CD8-positive, alpha-beta memory T cell (primary cell): ENCODE measurements at regions of chr2 and their contacts with region 1.

Region 1: GRCh38 chr2:219229305-219230058 is at the starts of genes ANKZF1 and ATG9A:
- DNase-seq: peak; percentile 96 to 99 (median 98)
- H3K4me3 ChIP-seq: peak within 1 kb of the TSS; percentile 93
- H3K4me3 Mint-ChIP-seq: peak within 1 kb of the TSS; percentile 92 to 100 (median 98)
- H3K27ac ChIP-seq: peak within 1 kb of the TSS; percentile 96
- H3K27ac Mint-ChIP-seq: peak within 1 kb of the TSS; percentile 94 to 100 (median 98)
- H3K4me1 ChIP-seq: peaks cover 44% of the 10 kb centered on the region
- H3K4me1 Mint-ChIP-seq: peaks cover 42 to 79% (median 54%) of the 10 kb centered on the region in 3 donors
- H3K27me3 ChIP-seq: no peaks in the 10 kb centered on the region
- H3K27me3 Mint-ChIP-seq: no peaks in the 10 kb centered on the region
- total RNA-seq, gene ANKZF1: 72.4 to 76.0 TPM
- total RNA-seq, gene ATG9A: 46.1 to 52.9 TPM

Region 2: GRCh38 chr2:219177552-219178376 is 51.7 kb before region 1 on chr2 and contains the start of gene RETREG2:
- CTCF ChIA-PET with region 1: interaction called, 4 read pairs
- POLR2A ChIA-PET with region 1: interaction called, 21 read pairs
- DNase-seq: peak; percentile 73 to 90 (median 85)
- H3K4me3 ChIP-seq: peak within 1 kb of the TSS; percentile 64
- H3K4me3 Mint-ChIP-seq: peak within 1 kb of the TSS; percentile 94 to 98 (median 96)
- H3K27ac ChIP-seq: peak within 1 kb of the TSS; percentile 85
- H3K27ac Mint-ChIP-seq: peak within 1 kb of the TSS; percentile 95 to 100 (median 99)
- H3K4me1 ChIP-seq: peaks cover 54% of the 10 kb centered on the region
- H3K4me1 Mint-ChIP-seq: peaks cover 55 to 79% (median 75%) of the 10 kb centered on the region in 3 donors
- H3K27me3 ChIP-seq: no peaks in the 10 kb centered on the region
- H3K27me3 Mint-ChIP-seq: no peaks in the 10 kb centered on the region
- total RNA-seq, gene RETREG2: 67.6 to 76.1 TPM

Region 3: DNA sequence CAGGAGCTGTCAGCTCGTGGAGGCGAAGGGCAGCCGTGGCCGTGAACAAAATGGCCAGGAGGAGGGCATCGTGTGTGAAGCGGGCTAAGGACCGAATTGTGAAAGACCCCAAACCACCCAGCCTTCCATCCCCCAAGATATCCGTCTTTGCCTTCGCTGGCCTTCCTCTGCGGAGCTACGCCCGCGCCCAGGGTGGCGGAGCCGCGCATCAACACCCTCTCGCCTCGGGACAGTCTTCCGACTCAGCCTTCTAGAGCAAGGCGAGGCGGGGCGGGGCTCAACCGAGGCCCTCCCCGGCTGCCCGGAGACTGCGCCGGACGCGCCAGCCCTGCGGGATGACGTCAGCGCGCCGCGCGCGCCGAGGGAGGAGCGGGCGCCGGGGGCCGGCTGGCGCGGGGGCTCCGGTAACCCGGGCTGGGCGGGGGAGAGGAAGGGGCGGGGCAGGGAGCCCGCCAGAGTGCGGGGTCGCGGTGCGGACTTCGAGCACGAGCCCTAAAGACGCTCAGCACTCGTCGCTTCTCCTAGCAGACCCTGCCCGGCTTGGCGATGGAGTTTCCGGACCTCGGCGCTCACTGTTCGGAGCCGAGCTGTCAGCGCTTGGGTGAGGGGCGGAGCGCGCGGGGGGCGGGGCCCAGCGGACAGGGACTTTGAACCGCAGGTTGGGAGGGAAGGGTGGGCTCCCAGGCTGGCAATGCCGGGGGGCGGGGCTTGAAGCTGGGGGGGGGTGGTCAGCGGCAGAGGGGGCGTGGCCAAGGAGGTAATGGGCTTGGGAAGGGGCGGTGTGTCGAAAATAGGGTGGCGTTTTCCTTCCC is 22.8 kb before region 1 on chr2 and contains the start of gene ZFAND2B:
- CTCF ChIA-PET with region 1: interaction called, 7 read pairs
- POLR2A ChIA-PET with region 1: interaction called, 11 read pairs
- DNase-seq: peak; percentile 95 to 98 (median 96)
- H3K4me3 ChIP-seq: peak within 1 kb of the TSS; percentile 81
- H3K4me3 Mint-ChIP-seq: peak within 1 kb of the TSS; percentile 88 to 97 (median 94)
- H3K27ac ChIP-seq: peak within 1 kb of the TSS; percentile 85
- H3K27ac Mint-ChIP-seq: peak within 1 kb of the TSS; percentile 95 to 99 (median 96)
- H3K4me1 ChIP-seq: peaks cover 29% of the 10 kb centered on the region
- H3K4me1 Mint-ChIP-seq: peaks cover 32 to 53% (median 49%) of the 10 kb centered on the region in 3 donors
- H3K27me3 ChIP-seq: no peaks in the 10 kb centered on the region
- H3K27me3 Mint-ChIP-seq: no peaks in the 10 kb centered on the region
- total RNA-seq, gene ZFAND2B: 32.4 to 36.8 TPM

Region 4: GRCh38 chr2:219245148-219245898 is 15.8 kb after region 1 on chr2 and contains the starts of genes GLB1L and STK16:
- CTCF ChIA-PET with region 1: interaction called, 30 read pairs
- POLR2A ChIA-PET with region 1: interaction called, 164 read pairs
- DNase-seq: peak; percentile 79 to 93 (median 83)
- H3K4me3 ChIP-seq: peak within 1 kb of the TSS; percentile 86
- H3K4me3 Mint-ChIP-seq: peak within 1 kb of the TSS; percentile 84 to 99 (median 91)
- H3K27ac ChIP-seq: peak within 1 kb of the TSS; percentile 93
- H3K27ac Mint-ChIP-seq: peak within 1 kb of the TSS; percentile 91 to 98 (median 98)
- H3K4me1 ChIP-seq: peaks cover 56% of the 10 kb centered on the region
- H3K4me1 Mint-ChIP-seq: peaks cover 54 to 66% (median 55%) of the 10 kb centered on the region in 3 donors
- H3K27me3 ChIP-seq: no peaks in the 10 kb centered on the region
- H3K27me3 Mint-ChIP-seq: peaks cover 0 to 6% of the 10 kb centered on the region in 2 donors
- total RNA-seq, gene GLB1L: 2.6 to 3.5 TPM
- total RNA-seq, gene STK16: 23.0 to 26.1 TPM

Region 5: GRCh38 chr2:219253753-219254590 is 24.5 kb after region 1 on chr2 and contains the start of gene TUBA4A:
- CTCF ChIA-PET with region 1: interaction called, 51 read pairs
- POLR2A ChIA-PET with region 1: interaction called, 164 read pairs
- DNase-seq: peak; percentile 88 to 95 (median 90)
- H3K4me3 ChIP-seq: peak within 1 kb of the TSS; percentile 99
- H3K4me3 Mint-ChIP-seq: peak within 1 kb of the TSS; percentile 84 to 99 (median 89)
- H3K27ac ChIP-seq: peak within 1 kb of the TSS; percentile 95
- H3K27ac Mint-ChIP-seq: peak within 1 kb of the TSS; percentile 91 to 100 (median 96)
- H3K4me1 ChIP-seq: peaks cover 37% of the 10 kb centered on the region
- H3K4me1 Mint-ChIP-seq: peaks cover 45 to 50% (median 45%) of the 10 kb centered on the region in 3 donors
- H3K27me3 ChIP-seq: no peaks in the 10 kb centered on the region
- H3K27me3 Mint-ChIP-seq: no peaks in the 10 kb centered on the region
- total RNA-seq, gene TUBA4A: 175 to 178 TPM